Panc1 (cell line): ENCODE measurements at regions of chr12 and their contacts with region 1.

Region 1: DNA sequence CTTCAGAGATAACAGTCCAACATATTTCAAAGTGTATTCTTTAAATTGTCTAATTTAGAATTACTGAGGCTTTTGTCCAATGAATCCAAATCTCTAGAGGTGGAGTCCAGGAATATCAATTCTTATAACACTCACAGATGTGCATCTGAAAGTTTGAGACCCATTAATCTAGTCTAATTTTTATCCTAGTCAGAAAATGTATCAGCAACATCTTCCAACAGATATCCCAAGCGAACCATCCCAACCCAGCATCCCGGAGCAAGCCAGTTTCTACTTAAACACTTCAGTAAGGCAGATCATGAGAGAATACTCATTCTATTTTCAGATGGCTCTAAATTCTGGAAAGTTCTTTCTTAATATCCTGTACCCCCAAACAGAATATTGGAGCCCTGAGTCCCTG is 113.5 kb downstream of the BBS10 start:
- DNase-seq: no peak
- ATAC-seq: no peak
- H3K4me3 ChIP-seq: no peak overlapping the region
- H3K27ac ChIP-seq: no peak overlapping the region
- H3K4me1 ChIP-seq: no peaks in the 10 kb centered on the region; the same call in 1 of the 2 replicates
- H3K27me3 ChIP-seq: no peaks in the 10 kb centered on the region
- CTCF ChIP-seq: no peak

Region 2: GRCh38 chr12:75725521-75726111 is 509.1 kb before region 1 on chr12:
- CTCF ChIA-PET with region 1: no interaction called
- POLR2A ChIA-PET with region 1: no interaction called
- in situ Hi-C with region 1: no loop called
- intact Hi-C with region 1: no loop called
- DNase-seq: no peak
- ATAC-seq: peak; percentile 83
- H3K4me3 ChIP-seq: 0 out of 4 replicates have a peak overlapping the region, but pooled peaks of 1 of the 2 experiments have one; percentile 2
- H3K27ac ChIP-seq: peak overlapping the region; percentile 100
- H3K4me1 ChIP-seq: peaks cover 56% of the 10 kb centered on the region
- H3K27me3 ChIP-seq: no peaks in the 10 kb centered on the region
- CTCF ChIP-seq: peak; percentile 37

Region 3: DNA sequence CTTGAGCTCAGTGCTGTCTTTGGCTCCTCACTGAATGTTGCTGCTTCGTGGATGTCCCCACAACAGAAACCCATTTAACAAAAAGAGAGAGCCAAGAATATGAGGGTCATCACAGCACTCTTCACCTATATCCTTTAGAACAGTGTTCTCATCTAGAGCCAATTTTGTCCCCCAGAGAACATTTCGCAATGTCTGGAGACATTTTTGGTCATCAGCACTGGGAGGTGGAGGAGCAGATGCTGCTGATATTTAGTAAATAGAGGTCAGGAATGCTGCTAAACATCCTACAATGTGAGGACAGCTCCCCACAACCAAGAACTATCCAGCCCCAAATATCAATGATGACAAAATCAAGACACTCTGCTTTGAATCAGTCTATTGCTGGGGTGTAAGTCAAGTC is 21.0 kb after region 1 on chr12:
- CTCF ChIA-PET with region 1: no interaction called
- POLR2A ChIA-PET with region 1: interaction called, 11 read pairs
- in situ Hi-C with region 1: no loop called
- intact Hi-C with region 1: no loop called
- DNase-seq: no peak
- ATAC-seq: no peak
- H3K4me3 ChIP-seq: no peak overlapping the region
- H3K27ac ChIP-seq: no peak overlapping the region
- H3K4me1 ChIP-seq: no peaks in the 10 kb centered on the region
- H3K27me3 ChIP-seq: no peaks in the 10 kb centered on the region
- CTCF ChIP-seq: no peak